ENCODE measurements at regions of chr1 and their contacts with region 1.

Region 1: DNA sequence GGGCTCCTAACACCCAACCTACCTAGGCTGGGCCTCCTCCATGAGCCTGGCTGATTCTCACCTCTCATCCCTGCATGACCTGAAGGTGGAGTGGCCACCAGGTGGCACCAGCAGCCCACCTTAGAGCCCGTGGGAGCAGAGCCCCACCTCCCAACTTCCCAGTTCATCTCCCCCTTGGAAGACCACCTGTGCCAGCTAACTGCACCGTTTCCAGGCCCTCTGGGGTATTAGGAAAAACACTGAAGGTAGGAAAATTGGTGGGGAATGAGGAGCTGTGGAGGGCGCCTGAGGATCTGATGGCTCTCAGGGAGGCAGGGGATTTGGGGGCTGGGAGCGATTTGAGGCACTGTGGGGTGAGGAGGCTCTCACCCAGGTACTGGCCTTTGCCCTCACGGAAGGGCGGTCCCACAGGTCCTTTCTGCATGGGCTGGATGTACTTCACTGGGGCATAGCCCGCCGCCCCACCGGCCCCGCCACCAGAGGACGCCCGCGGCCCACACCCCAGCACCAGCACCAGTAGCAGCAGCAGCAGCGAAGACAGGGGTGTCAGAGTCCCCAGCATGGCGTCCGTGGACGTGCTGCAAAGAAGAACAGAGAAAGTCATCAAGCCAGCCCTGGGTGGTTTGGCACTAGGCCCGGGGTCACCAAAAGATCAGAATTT is 11.1 kb downstream of the ADPRS start:
- DNase-seq: peak; percentile 76 to 82
- H3K4me3 ChIP-seq: no peak overlapping the region
- H3K27ac ChIP-seq: no peak overlapping the region
- H3K4me1 ChIP-seq: peaks cover 11 to 26% of the 10 kb centered on the region in 2 donors
- H3K27me3 ChIP-seq: no peaks in the 10 kb centered on the region
- CTCF ChIP-seq: peak; percentile 70 to 92 (median 82)
- POLR2A ChIP-seq: no peak

Region 2: GRCh38 chr1:36134505-36135329 is 34.9 kb after region 1 on chr1:
- intact Hi-C with region 1: loop called (anchors 5 kb)
- DNase-seq: peak; percentile 44 to 52
- H3K4me3 ChIP-seq: no peak overlapping the region
- H3K27ac ChIP-seq: peak overlapping the region in 2 of 3 donors; percentile 41 to 67
- H3K4me1 ChIP-seq: peaks cover 10 to 29% of the 10 kb centered on the region in 2 donors
- H3K27me3 ChIP-seq: no peaks in the 10 kb centered on the region
- CTCF ChIP-seq: peak; percentile 24 to 69 (median 53)
- POLR2A ChIP-seq: no peak

Region 3: DNA sequence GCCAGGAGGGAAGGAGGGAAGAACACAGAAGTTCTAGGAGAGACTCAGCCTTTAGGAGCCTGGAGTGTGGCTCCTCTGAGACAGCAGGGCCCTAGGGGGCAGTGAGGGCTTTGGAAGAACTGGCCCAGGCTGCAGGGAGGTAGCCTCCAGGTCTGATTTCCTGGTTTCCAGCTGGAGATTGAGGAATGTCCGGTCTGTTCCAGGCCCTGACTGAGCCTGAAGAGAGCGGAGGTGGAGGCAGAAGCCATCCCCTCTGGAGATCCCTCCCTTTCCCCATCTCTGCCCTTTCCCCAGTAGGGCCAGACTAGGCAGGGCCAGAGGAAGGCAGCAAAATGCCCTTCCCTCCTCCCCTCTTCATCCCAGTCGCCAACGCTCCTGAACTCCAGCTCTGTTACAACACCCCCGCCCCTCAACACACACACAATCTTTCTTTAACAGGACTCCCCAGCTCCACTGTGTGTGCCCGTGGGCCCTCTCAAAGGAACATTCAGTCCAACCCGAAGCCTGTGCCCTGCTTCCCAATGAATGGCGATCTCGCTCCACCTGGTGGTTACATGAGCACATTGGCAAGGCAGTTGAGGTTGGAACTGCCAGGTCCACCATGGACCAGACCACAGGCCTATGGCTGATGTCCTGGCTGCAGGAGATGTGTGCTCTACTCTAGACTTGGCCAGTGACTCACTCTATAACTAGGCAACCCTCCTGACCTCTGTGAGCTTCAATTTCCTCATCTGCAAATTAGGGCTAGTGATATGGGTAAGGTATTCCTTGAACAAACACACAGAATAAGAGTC is 88.2 kb after region 1 on chr1:
- intact Hi-C with region 1: loop called (anchors 5 kb)
- DNase-seq: peak; percentile 92 to 94
- H3K4me3 ChIP-seq: no peak overlapping the region
- H3K27ac ChIP-seq: peak overlapping the region; percentile 77 to 91 (median 83)
- H3K4me1 ChIP-seq: peaks cover 9 to 17% of the 10 kb centered on the region in 2 donors
- H3K27me3 ChIP-seq: no peaks in the 10 kb centered on the region
- CTCF ChIP-seq: peak in 5 of 6 experiments; percentile 58 to 99 (median 95)
- POLR2A ChIP-seq: no peak

Region 4: GRCh38 chr1:36285448-36286101 is 185.8 kb after region 1 on chr1:
- intact Hi-C with region 1: loop called (anchors 5 kb)
- DNase-seq: peak; percentile 69 to 72
- H3K4me3 ChIP-seq: no peak overlapping the region
- H3K27ac ChIP-seq: no peak overlapping the region
- H3K4me1 ChIP-seq: peaks cover 14 to 25% of the 10 kb centered on the region in 2 donors
- H3K27me3 ChIP-seq: no peaks in the 10 kb centered on the region
- CTCF ChIP-seq: peak; percentile 22 to 79 (median 74)
- POLR2A ChIP-seq: no peak

Region 5: DNA sequence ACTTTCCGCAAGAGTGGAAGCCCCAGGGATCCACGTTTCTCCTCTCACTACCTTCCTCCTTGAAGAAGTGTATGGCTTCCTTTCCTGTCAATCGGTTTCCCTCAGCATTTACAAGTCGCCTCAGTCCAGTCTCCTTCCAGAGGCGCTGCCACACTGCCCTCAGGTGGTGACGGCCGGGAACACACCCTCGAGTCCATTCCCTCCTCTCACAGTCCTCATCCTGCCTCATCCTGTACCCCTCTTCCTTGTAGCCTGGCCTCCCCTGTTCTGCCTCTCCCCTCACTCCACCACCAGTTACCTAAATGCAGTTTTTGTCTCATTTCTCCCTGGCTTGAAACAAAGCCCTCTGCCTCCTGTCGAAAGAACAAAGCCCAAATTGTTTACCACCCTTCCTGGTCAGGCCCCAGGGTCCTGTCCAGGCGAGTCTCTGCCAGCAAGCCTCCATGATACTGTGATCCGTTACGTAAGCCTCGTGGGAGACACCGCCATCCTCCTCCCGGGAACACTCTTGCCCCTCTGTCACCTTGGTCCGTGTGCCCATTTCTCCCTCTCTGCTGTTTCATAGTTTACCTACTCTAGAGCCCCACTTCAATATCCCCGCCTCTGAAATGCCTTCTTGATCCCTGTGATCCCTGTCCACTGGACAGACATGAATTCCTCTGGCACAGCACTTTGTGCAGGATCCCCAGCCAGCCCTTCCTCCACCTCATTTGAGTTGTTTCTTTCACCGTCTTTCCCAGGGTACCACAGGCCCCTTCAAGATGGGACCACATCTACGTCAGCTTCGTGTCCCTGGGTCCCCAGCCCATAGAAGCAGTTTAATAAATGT is 321.2 kb after region 1 on chr1:
- intact Hi-C with region 1: loop called (anchors 10 kb)
- DNase-seq: peak; percentile 83 to 90
- H3K4me3 ChIP-seq: no peak overlapping the region
- H3K27ac ChIP-seq: no peak overlapping the region
- H3K4me1 ChIP-seq: peaks cover 0 to 4% of the 10 kb centered on the region in 2 donors
- H3K27me3 ChIP-seq: no peaks in the 10 kb centered on the region
- CTCF ChIP-seq: peak; percentile 68 to 96 (median 90)
- POLR2A ChIP-seq: no peak

Region 6: GRCh38 chr1:36650200-36651065 is 550.6 kb after region 1 on chr1:
- intact Hi-C with region 1: no loop called
- DNase-seq: peak; percentile 72 to 73
- H3K4me3 ChIP-seq: no peak overlapping the region
- H3K27ac ChIP-seq: no peak overlapping the region
- H3K4me1 ChIP-seq: peaks cover 3 to 19% of the 10 kb centered on the region in 2 donors
- H3K27me3 ChIP-seq: no peaks in the 10 kb centered on the region
- CTCF ChIP-seq: peak; percentile 53 to 93 (median 67)
- POLR2A ChIP-seq: no peak

Region 7: GRCh38 chr1:36687312-36687711 is 587.5 kb after region 1 on chr1:
- intact Hi-C with region 1: no loop called
- DNase-seq: no peak
- H3K4me3 ChIP-seq: no peak overlapping the region
- H3K27ac ChIP-seq: no peak overlapping the region
- H3K4me1 ChIP-seq: no peaks in the 10 kb centered on the region
- H3K27me3 ChIP-seq: no peaks in the 10 kb centered on the region
- CTCF ChIP-seq: no peak
- POLR2A ChIP-seq: no peak